ENCODE measurements at regions of chr2 and their contacts with region 1.

Region 1: GRCh38 chr2:38106405-38107094 is 30.6 kb upstream of the CYP1B1 start:
- DNase-seq: no peak
- ATAC-seq: peak; percentile 63
- H3K4me3 Mint-ChIP-seq: no peak overlapping the region
- H3K27ac Mint-ChIP-seq: peak overlapping the region; percentile 91
- H3K4me1 Mint-ChIP-seq: peaks cover 39% of the 10 kb centered on the region
- H3K27me3 Mint-ChIP-seq: peaks cover 15% of the 10 kb centered on the region
- CTCF ChIP-seq: no peak

Region 2: DNA sequence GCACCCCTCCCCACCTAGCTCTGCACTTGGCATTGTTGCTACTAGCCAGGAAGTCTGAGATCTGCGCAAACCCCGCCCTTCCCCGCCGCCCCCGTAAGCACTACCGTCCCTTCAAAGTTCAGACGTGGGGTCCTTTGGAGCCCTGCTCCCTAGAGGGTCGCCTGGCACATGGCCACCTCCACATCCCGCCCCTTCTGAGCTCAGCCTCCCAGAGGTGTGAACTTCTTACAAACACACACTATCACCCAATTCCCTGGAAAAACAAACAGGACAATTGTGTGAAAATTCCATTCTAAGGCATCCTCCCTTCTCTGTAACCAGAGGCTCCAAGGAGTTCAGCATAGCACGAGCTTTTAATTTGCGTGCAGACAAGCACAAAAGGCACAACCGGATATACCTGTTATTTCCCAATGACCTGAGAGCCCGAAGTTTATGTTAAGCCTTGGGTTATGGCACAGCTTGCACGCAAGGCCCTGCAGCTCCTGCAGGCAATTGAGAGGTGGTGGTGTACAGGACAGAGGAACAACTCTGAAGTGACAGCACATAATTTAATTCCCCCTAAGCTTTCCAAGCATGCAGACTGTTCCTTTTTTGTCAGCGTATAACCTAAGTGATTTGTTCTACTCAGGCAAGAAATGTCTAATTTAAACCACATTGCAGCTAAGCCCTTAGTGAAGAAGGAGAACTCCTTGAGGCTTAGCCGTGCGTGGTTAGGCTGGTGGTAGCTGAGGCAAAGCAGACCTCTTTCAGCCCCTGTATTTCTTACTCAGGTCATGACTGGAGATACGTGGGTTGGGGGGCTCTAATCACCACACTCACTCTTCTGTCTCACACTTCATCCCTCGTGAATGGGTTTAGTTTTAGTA is 10.3 kb before region 1 on chr2:
- CTCF ChIA-PET with region 1: interaction called, 10 read pairs
- POLR2A ChIA-PET with region 1: interaction called, 4 read pairs
- DNase-seq: no peak
- ATAC-seq: peak; percentile 11; the same call in 1 of the 2 replicates
- H3K4me3 Mint-ChIP-seq: no peak overlapping the region
- H3K27ac Mint-ChIP-seq: no peak overlapping the region
- H3K4me1 Mint-ChIP-seq: peaks cover 86% of the 10 kb centered on the region
- H3K27me3 Mint-ChIP-seq: peaks cover 88% of the 10 kb centered on the region
- CTCF ChIP-seq: no peak